ENCODE measurements at regions of chr12 and their contacts with region 1.

Region 1: GRCh38 chr12:88299567-88300101 is 157.5 kb downstream of the TMTC3 start:
- DNase-seq: peak; percentile 95
- ATAC-seq: peak; percentile 72
- H3K4me3 ChIP-seq: no peak overlapping the region
- H3K27ac ChIP-seq: peak overlapping the region; percentile 88
- H3K4me1 ChIP-seq: peaks cover 40% of the 10 kb centered on the region
- H3K27me3 ChIP-seq: no peaks in the 10 kb centered on the region
- CTCF ChIP-seq: no peak

Region 2: DNA sequence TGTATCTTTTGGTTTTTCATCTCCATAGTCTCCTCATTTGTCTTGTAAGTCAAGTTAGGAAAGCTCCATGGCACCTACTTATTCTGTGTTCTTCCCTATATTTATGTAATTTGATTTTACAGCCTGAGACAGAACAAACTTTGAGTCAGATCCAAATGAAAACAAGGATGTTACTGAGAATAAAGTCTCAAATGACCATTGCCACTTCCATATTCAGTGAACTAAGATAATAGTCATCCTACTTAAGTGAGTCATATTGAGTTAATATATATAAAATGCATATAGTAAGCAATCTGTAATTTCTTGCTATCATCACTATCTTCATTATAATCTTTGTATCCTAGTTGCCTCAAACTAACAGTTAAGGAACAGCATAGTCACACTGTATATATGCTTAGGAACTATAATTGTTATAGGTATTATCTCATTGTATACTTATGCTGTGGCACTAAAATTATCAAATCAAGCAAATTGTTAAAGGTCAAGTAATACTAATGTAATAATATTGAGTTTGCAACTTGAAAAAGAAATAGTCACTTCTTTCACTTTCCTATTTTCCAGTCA is 126.7 kb before region 1 on chr12:
- CTCF ChIA-PET with region 1: no interaction called
- POLR2A ChIA-PET with region 1: no interaction called
- intact Hi-C with region 1: loop called (anchors 5 kb)
- DNase-seq: peak; percentile 93
- ATAC-seq: peak; percentile 97
- H3K4me3 ChIP-seq: no peak overlapping the region
- H3K27ac ChIP-seq: peak overlapping the region; percentile 84
- H3K4me1 ChIP-seq: peaks cover 19% of the 10 kb centered on the region
- H3K27me3 ChIP-seq: no peaks in the 10 kb centered on the region
- CTCF ChIP-seq: no peak

Region 3: DNA sequence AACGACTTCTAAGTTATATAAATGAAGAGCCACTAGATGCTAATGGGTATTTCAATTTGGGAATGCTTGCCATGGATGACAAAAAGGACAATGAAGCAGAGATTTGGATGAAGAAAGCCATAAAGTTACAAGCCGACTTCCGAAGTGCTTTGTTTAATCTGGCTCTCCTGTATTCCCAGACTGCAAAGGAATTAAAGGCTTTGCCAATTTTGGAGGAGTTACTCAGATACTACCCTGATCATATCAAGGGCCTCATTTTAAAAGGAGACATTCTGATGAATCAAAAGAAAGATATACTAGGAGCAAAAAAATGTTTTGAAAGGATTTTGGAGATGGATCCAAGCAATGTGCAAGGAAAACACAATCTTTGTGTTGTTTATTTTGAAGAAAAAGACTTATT is 104.8 kb before region 1 on chr12:
- CTCF ChIA-PET with region 1: no interaction called
- POLR2A ChIA-PET with region 1: no interaction called
- intact Hi-C with region 1: no loop called
- DNase-seq: no peak
- ATAC-seq: no peak
- H3K4me3 ChIP-seq: no peak overlapping the region
- H3K27ac ChIP-seq: no peak overlapping the region
- H3K4me1 ChIP-seq: no peaks in the 10 kb centered on the region
- H3K27me3 ChIP-seq: no peaks in the 10 kb centered on the region
- CTCF ChIP-seq: no peak

Region 4: GRCh38 chr12:88553941-88554658 is 254.5 kb after region 1 on chr12:
- CTCF ChIA-PET with region 1: no interaction called
- POLR2A ChIA-PET with region 1: no interaction called
- intact Hi-C with region 1: loop called (anchors 10 kb)
- DNase-seq: peak; percentile 92
- ATAC-seq: peak; percentile 44
- H3K4me3 ChIP-seq: no peak overlapping the region
- H3K27ac ChIP-seq: peak overlapping the region; percentile 83
- H3K4me1 ChIP-seq: peaks cover 38% of the 10 kb centered on the region
- H3K27me3 ChIP-seq: no peaks in the 10 kb centered on the region
- CTCF ChIP-seq: no peak